ENCODE measurements at regions of chr11 and their contacts with region 1.

Region 1: GRCh38 chr11:20035701-20036620 is 124.3 kb downstream of the DBX1 start:
- DNase-seq: no peak
- ATAC-seq: peak; percentile 20 to 64
- H3K4me3 ChIP-seq: no peak overlapping the region
- H3K27ac ChIP-seq: peak overlapping the region; percentile 36
- H3K4me1 ChIP-seq: peaks cover 10% of the 10 kb centered on the region
- H3K27me3 ChIP-seq: no peaks in the 10 kb centered on the region

Region 2: DNA sequence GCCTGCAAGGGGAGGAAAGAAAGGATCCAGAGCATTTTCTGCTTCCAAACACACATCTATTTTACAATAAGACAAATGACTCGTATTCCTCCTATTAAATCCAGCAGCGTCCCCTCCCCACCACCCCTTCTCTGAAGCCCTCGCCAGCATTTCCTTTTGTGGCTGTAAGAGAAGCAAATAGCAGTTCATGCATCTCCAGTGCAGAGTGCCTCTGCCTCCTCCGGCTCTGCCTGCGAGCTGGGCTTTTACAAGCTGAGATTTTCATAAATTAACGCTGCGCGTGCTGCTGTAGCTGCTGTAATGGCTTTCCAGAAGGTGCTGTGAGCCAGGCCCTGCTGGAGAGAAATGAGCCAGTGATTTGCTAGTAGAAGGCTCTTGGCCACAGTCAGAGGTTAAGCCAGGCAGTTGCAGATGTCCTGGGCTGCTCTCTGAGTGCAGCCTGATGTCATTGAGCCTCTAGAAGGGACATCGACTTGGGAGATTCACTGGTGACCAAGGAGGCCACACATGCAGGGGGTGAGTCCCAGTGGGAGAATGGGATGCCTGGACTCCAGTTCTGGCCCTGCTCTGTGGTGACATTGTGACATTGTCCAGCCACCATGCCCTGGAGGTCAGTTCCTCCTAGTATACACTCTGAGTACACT is 457.9 kb before region 1 on chr11:
- intact Hi-C with region 1: no loop called
- DNase-seq: peak; percentile 43 to 77 (median 74)
- ATAC-seq: peak; percentile 74
- H3K4me3 ChIP-seq: no peak overlapping the region
- H3K27ac ChIP-seq: peak overlapping the region; percentile 83
- H3K4me1 ChIP-seq: peaks cover 19% of the 10 kb centered on the region
- H3K27me3 ChIP-seq: no peaks in the 10 kb centered on the region

Region 3: DNA sequence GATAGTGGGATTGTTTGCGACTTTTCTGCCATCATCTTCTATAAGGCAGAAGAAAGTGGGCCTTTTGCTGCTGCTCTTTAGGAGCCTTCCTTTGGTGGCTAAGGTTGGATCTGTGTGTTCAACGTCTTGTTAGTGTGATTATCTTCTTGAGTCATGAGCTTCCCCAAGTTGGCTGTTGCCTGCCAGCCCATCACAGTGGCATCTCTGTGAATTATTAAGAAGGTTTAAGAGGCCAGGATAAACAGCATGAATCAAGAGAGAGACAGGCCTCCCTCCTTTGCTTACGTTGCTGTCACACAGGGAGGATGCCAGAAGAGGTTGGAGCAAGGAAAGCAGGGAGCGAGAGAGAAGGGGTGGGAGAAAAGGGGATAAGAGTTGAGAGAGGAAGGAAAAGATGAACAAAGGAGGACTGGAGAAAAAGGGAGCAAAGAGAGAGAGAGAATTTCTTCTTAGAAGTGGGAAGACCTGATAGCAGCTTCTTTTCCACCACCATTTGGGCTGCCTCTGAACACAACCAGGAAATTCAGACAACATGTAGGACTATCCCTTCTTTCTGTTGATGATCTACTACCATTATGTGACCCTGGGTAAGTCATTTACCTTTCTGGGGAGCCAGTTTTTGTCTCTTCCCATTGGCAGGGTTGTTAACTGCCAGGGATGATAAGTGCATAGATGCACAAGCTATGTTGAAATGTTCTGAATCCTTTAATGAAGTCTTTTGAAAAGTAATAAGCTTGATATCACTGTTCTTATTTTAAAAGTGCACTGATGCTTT is 196.8 kb before region 1 on chr11:
- intact Hi-C with region 1: loop called in 1 of 4 experiments (anchors 5 kb)
- DNase-seq: no peak
- ATAC-seq: no peak
- H3K4me3 ChIP-seq: no peak overlapping the region
- H3K27ac ChIP-seq: no peak overlapping the region
- H3K4me1 ChIP-seq: no peaks in the 10 kb centered on the region
- H3K27me3 ChIP-seq: no peaks in the 10 kb centered on the region

Measured in right cardiac atrium (tissue), 5 donors.